Activated CD4-positive, alpha-beta memory T cell treated with anti-CD3 and anti-CD28 coated beads for 36 hours (primary cell): ENCODE measurements at regions of chr9 and their contacts with region 1.

Region 1: DNA sequence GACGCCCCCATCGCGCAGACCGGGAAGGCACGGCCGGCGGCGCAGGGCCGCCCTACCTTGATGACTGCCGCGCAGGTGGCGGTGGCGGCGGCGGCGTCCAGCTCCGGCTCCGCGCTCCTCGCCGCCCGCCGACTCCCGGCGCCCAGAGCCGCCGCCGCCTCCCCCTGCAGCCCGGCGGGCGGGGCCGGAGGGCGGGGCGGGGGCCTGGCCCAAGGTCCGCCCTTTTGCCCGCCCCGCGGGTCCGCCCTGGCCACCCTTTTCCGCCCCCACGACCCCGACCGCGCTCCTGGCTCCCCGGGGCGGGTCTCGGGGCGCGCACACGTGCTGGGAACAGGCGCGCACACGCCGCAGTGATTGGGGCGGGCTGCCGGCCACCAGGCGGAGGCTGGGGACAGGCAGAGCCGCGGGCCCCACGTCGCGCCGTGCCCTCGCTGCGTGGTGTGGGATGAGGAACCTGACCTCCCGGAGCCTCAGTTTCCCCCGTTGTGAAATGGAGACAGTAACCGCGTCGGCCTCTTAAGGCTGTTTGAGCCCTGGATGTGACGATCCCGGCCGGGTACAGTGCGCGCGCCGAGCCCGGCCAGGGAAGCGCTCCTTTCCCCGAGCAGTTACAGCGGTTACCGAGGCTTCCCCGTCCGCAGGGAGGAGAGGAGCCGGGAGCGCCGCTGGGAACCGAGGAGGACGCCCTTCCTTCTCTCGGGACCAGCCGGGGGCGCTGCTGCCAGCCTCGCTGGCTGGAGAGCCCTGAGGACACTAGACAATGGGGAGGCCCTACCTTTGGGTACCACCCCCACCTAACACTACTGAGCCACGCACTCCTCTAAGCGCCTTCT is at the start of gene CORO2A:
- DNase-seq: peak; percentile 79
- H3K4me3 Mint-ChIP-seq: peak within 1 kb of the TSS; percentile 86
- H3K27ac Mint-ChIP-seq: peak within 1 kb of the TSS; percentile 49
- H3K4me1 Mint-ChIP-seq: peaks cover 21% of the 10 kb centered on the region
- H3K27me3 Mint-ChIP-seq: no peaks in the 10 kb centered on the region
- total RNA-seq, gene CORO2A: 9.8 to 9.9 TPM

Region 2: DNA sequence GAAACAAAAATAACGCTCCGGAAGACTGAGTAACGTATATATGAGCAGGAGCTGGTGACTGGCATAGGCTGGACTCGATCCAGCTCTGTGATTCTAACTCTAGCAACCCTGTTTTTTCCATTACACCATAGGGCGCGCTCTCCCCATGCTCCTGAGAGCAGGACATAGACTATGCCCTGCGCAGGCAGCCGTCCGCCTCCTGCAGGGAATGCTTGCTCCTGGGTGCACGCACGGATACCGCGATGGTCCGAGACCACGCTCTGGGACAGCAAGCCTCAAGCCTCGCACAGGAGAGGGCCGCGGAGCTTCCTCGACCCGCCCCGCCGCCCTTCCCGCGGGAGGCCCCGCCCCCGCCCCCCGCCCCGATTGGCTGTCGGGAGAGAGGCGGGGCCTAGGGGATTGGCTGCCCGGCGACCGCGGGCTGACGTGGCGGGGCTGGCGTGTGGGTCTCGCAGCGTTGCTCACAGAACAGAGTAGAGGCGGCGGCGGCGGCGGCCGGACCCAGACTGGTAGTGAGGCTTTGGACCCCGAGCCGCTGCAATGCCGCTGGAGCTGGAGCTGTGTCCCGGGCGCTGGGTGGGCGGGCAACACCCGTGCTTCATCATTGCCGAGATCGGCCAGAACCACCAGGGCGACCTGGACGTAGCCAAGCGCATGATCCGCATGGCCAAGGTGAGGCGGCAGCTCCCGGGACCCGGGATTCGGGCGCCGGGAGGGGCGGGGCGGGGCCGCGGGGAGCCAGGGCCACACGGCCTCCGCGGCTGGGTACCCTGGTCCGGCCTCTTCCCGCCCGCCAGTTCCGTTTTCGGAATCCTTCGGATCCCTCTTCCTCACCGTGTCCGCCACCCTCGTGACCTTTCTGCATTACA is 136.2 kb before region 1 on chr9 and contains the start of gene NANS:
- CTCF ChIA-PET with region 1: no interaction called
- POLR2A ChIA-PET with region 1: interaction called, 4 read pairs
- intact Hi-C with region 1: loop called (anchors 5 kb)
- DNase-seq: peak; percentile 95
- H3K4me3 Mint-ChIP-seq: peak within 1 kb of the TSS; percentile 92
- H3K27ac Mint-ChIP-seq: peak within 1 kb of the TSS; percentile 91
- H3K4me1 Mint-ChIP-seq: peaks cover 19% of the 10 kb centered on the region
- H3K27me3 Mint-ChIP-seq: no peaks in the 10 kb centered on the region
- total RNA-seq, gene NANS: 48.4 to 51.9 TPM

Region 3: GRCh38 chr9:98101868-98102273 is 90.8 kb before region 1 on chr9:
- CTCF ChIA-PET with region 1: no interaction called
- POLR2A ChIA-PET with region 1: interaction called, 5 read pairs
- intact Hi-C with region 1: loop called (anchors 5 kb)
- DNase-seq: peak; percentile 89
- H3K4me3 Mint-ChIP-seq: peak overlapping the region; percentile 66
- H3K27ac Mint-ChIP-seq: peak overlapping the region; percentile 95
- H3K4me1 Mint-ChIP-seq: peaks cover 88% of the 10 kb centered on the region
- H3K27me3 Mint-ChIP-seq: no peaks in the 10 kb centered on the region

Region 4: GRCh38 chr9:98168941-98169488 is 23.7 kb before region 1 on chr9:
- CTCF ChIA-PET with region 1: interaction called, 3 read pairs
- POLR2A ChIA-PET with region 1: interaction called, 3 read pairs
- intact Hi-C with region 1: loop called (anchors 2 kb)
- DNase-seq: peak; percentile 81
- H3K4me3 Mint-ChIP-seq: no peak overlapping the region
- H3K27ac Mint-ChIP-seq: peak overlapping the region; percentile 52
- H3K4me1 Mint-ChIP-seq: peaks cover 32% of the 10 kb centered on the region
- H3K27me3 Mint-ChIP-seq: no peaks in the 10 kb centered on the region

Region 5: GRCh38 chr9:98207606-98208005 is 14.9 kb after region 1 on chr9:
- CTCF ChIA-PET with region 1: interaction called, 46 read pairs
- POLR2A ChIA-PET with region 1: interaction called, 3 read pairs
- intact Hi-C with region 1: no loop called
- DNase-seq: no peak
- H3K4me3 Mint-ChIP-seq: no peak overlapping the region
- H3K27ac Mint-ChIP-seq: no peak overlapping the region
- H3K4me1 Mint-ChIP-seq: peaks cover 2% of the 10 kb centered on the region
- H3K27me3 Mint-ChIP-seq: no peaks in the 10 kb centered on the region